A549 (cell line): ENCODE measurements at regions of chr17 and their contacts with region 1.

Region 1: DNA sequence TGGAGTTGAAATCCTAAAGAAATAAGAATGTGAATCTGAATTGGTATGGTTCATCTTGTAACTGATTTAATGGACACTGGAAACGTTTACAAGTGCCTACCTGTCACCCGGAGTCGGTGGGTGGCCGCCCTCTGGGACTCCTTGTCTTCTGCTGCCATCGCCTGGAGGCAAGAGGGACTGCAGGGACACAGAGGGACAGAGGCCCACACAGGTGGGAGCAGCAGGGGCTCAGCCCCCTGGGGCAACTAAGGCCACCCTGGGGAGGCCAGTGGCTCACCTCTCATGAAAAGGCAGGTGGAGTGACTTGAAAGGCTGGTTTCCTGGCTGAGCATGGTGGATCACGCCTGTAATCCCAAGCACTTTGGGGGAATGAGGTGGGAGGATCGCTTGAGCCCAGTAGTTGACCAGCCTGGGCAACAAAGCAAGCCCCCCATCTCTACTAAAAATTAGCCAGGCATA is 23.2 kb downstream of the TMEM92 start:
- DNase-seq: peak; percentile 81 to 90
- ATAC-seq: peak; percentile 93 to 99
- H3K4me3 ChIP-seq: no peak overlapping the region
- H3K27ac ChIP-seq: no peak overlapping the region
- H3K4me1 ChIP-seq: no peaks in the 10 kb centered on the region
- CTCF ChIP-seq: peak; percentile 99
- EP300 ChIP-seq: no peak
- POLR2A ChIP-seq: no peak
- RAD21 ChIP-seq: peak; percentile 100

Region 2: GRCh38 chr17:50114849-50115357 is 182.5 kb before region 1 on chr17:
- CTCF ChIA-PET with region 1: interaction called, 16 read pairs
- POLR2A ChIA-PET with region 1: no interaction called
- DNase-seq: peak; percentile 66 to 82
- ATAC-seq: peak; percentile 17 to 69; a peak in 4 of 6 replicates
- H3K4me3 ChIP-seq: no peak overlapping the region
- H3K27ac ChIP-seq: no peak overlapping the region
- H3K4me1 ChIP-seq: peaks cover 10% of the 10 kb centered on the region; the same call in 1 of the 3 replicates
- CTCF ChIP-seq: peak; percentile 76
- EP300 ChIP-seq: no peak
- POLR2A ChIP-seq: no peak
- RAD21 ChIP-seq: peak; percentile 66 to 83

Region 3: DNA sequence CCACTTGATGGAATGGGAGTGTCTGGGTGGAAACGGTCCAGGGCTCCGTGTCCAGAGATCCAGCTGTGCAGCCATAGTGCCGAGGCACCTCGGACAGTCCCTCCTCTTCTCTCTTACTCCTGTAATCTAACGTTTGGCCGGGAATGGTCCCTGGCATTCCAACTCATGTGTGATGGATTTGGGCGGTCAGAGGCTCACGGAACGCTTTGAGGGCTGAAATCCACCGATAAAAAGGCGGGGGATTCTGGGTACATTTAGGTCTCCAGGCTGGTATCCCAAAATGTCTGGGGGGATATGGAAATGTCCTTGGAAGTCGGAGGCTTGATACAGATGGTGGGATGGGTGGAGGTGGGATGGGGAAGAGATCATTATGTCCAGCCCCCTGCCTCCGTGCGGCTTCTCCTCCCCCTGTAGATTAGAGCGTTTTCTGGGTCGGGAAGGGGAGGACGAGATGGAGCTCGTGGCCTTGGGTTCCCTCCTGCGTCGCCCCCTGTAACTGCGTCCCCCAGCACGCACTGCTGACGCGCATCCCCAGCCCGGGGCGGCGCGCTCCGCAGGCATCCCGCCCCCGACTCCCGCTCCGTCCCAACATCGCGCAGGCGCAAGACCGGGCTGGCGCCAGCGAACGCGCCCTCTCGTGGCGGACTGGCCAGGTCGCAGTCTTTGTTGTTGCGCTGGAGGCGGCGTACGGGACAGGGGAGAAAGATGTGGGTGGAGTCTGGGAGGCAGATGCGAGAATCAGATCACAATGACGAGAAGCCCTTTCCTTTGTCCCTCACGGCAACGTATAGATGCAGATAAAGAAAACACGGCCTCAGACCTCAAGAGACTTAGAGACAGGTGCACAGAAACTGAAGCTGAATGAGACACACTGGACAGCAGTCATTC is 136.2 kb before region 1 on chr17:
- CTCF ChIA-PET with region 1: interaction called, 21 read pairs
- POLR2A ChIA-PET with region 1: no interaction called
- DNase-seq: peak; percentile 92 to 100
- ATAC-seq: peak; percentile 88 to 96
- H3K4me3 ChIP-seq: peak overlapping the region; percentile 74
- H3K27ac ChIP-seq: peak overlapping the region; percentile 80 to 86
- H3K4me1 ChIP-seq: peaks cover 9% of the 10 kb centered on the region; the same call in 2 of the 3 replicates
- CTCF ChIP-seq: peak; percentile 98
- EP300 ChIP-seq: no peak
- POLR2A ChIP-seq: peak; percentile 92
- RAD21 ChIP-seq: peak; percentile 72 to 80

Region 4: GRCh38 chr17:50189550-50190292 is 107.7 kb before region 1 on chr17:
- CTCF ChIA-PET with region 1: interaction called, 70 read pairs
- POLR2A ChIA-PET with region 1: no interaction called
- DNase-seq: no peak
- ATAC-seq: no peak
- H3K4me3 ChIP-seq: no peak overlapping the region
- H3K27ac ChIP-seq: peak overlapping the region in 1 of 2 experiments; percentile 9; a peak in 1 of 6 replicates
- H3K4me1 ChIP-seq: peaks cover 4% of the 10 kb centered on the region
- CTCF ChIP-seq: no peak
- EP300 ChIP-seq: no peak
- POLR2A ChIP-seq: no peak
- RAD21 ChIP-seq: no peak

Region 5: GRCh38 chr17:50331085-50331791 is 33.8 kb after region 1 on chr17:
- CTCF ChIA-PET with region 1: interaction called, 11 read pairs
- POLR2A ChIA-PET with region 1: no interaction called
- DNase-seq: no peak
- ATAC-seq: peak in 1 of 2 experiments; percentile 37; a peak in 1 of 6 replicates
- H3K4me3 ChIP-seq: no peak overlapping the region
- H3K27ac ChIP-seq: no peak overlapping the region
- H3K4me1 ChIP-seq: no peaks in the 10 kb centered on the region
- CTCF ChIP-seq: no peak
- EP300 ChIP-seq: no peak
- POLR2A ChIP-seq: no peak
- RAD21 ChIP-seq: no peak